ENCODE measurements at regions of chr5 and their contacts with region 1.

Region 1: GRCh38 chr5:151051066-151051930 is 29.5 kb downstream of the TNIP1 start:
- DNase-seq: peak; percentile 91
- ATAC-seq: peak; percentile 86

Region 2: DNA sequence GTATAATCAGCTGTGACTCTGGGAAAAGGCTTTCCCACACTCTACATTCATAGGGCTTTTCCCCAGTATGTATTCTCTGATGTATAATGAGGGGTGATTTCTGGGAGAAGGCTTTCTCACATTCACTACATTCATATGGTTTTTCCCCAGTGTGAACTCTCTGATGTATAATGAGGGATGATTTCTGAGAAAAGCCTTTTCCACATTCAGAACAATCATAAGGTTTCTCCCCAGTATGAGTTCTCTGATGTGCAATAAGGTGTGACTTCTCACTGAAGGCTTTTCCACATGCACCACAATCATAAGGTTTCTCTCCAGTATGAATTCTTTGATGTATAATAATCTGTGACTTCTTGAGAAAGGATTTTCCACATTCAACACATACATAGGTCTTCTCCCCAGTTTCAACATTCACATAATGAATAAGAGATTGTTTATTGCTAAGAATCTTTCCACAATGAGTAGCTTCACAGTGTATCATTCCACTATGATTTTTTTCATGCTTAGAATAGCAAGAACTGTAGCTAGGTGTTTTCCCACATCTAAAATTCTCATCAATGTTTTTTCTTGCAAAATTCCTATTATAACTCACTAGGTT is 119.8 kb before region 1 on chr5:
- intact Hi-C with region 1: no loop called
- DNase-seq: no peak
- ATAC-seq: no peak

Region 3: GRCh38 chr5:151002250-151002649 is 49.0 kb before region 1 on chr5:
- intact Hi-C with region 1: loop called (anchors 5 kb)
- DNase-seq: no peak
- ATAC-seq: no peak

Region 4: DNA sequence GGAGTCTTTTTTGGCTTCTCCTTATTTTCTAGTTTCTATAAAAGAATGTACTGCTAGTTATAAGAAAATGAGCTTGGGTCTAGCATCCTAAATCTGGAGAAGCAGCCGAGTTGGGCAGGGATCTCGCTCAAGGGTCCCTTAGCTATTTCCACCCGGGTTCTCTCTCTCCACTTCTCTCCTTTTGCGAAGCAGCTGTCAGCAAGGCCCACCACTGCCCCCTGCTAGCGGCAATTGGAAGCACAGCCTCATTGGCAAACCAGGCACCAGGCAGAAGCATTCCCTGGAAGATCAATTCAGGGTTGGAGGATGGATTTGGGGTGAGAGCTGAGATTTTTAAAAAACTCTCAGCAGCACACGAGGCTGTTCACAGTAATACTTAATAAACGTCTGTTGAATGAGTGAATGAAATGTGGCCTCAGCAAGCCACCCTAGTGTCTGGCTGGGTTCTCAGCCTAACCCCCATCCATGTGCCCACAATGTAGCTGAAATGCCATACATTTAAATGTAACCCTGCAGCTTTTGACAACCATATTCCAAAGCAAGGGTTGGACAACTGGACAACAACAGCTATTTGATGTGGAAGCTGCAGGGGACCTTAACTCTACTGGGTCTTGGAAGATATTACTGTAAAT is 64.1 kb after region 1 on chr5:
- intact Hi-C with region 1: loop called (anchors 5 kb)
- DNase-seq: peak; percentile 91
- ATAC-seq: peak; percentile 83

Region 5: GRCh38 chr5:151164686-151165392 is 113.5 kb after region 1 on chr5:
- intact Hi-C with region 1: loop called (anchors 5 kb)
- DNase-seq: peak; percentile 86
- ATAC-seq: peak; percentile 92

Region 6: DNA sequence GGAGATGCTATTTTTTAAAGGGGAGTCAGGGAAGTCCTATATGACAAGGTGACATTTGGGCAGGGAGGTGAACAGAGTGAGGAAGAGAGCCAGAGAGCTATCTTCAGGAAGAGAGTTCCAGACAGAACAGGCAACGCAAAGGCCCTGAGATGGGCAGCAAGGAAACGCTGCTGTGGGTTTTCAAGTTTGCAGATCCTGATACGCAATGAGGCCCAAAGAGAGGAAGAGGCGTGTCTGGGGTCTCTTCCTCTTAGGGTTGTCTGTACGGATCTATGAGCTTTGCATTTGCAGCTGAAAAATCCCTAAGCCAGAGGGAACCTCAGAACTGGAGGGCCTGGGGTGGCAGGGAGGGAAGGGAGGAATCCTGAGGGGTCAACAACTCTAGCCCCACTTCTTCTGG is 526.3 kb after region 1 on chr5:
- intact Hi-C with region 1: no loop called
- DNase-seq: no peak
- ATAC-seq: peak; percentile 53